ENCODE measurements at regions of chr16 and their contacts with region 1.

Region 1: GRCh38 chr16:87765776-87766484 is at the start of gene KLHDC4:
- DNase-seq: peak; percentile 93
- ATAC-seq: peak; percentile 85
- H3K4me3 ChIP-seq: peak within 1 kb of the TSS; percentile 59 to 95 (median 78)
- H3K4me3 Mint-ChIP-seq: peak within 1 kb of the TSS; percentile 100
- H3K27ac ChIP-seq: peak within 1 kb of the TSS; percentile 93
- H3K27ac Mint-ChIP-seq: peak within 1 kb of the TSS; percentile 98
- H3K4me1 ChIP-seq: peaks cover 15 to 26% of the 10 kb centered on the region in 2 donors
- H3K4me1 Mint-ChIP-seq: peaks cover 36% of the 10 kb centered on the region
- H3K27me3 ChIP-seq: no peaks in the 10 kb centered on the region
- H3K27me3 Mint-ChIP-seq: no peaks in the 10 kb centered on the region
- CTCF ChIP-seq: no peak
- total RNA-seq, gene KLHDC4: 90.8 and 115 TPM in 2 replicates

Region 2: GRCh38 chr16:87033541-87034300 is 732.2 kb before region 1 on chr16:
- CTCF ChIA-PET with region 1: no interaction called
- POLR2A ChIA-PET with region 1: no interaction called
- intact Hi-C with region 1: no loop called
- DNase-seq: no peak
- ATAC-seq: no peak
- H3K4me3 ChIP-seq: no peak overlapping the region
- H3K4me3 Mint-ChIP-seq: no peak overlapping the region
- H3K27ac ChIP-seq: no peak overlapping the region
- H3K27ac Mint-ChIP-seq: no peak overlapping the region
- H3K4me1 ChIP-seq: no peaks in the 10 kb centered on the region
- H3K4me1 Mint-ChIP-seq: no peaks in the 10 kb centered on the region
- H3K27me3 ChIP-seq: no peaks in the 10 kb centered on the region
- H3K27me3 Mint-ChIP-seq: no peaks in the 10 kb centered on the region
- CTCF ChIP-seq: no peak

Region 3: DNA sequence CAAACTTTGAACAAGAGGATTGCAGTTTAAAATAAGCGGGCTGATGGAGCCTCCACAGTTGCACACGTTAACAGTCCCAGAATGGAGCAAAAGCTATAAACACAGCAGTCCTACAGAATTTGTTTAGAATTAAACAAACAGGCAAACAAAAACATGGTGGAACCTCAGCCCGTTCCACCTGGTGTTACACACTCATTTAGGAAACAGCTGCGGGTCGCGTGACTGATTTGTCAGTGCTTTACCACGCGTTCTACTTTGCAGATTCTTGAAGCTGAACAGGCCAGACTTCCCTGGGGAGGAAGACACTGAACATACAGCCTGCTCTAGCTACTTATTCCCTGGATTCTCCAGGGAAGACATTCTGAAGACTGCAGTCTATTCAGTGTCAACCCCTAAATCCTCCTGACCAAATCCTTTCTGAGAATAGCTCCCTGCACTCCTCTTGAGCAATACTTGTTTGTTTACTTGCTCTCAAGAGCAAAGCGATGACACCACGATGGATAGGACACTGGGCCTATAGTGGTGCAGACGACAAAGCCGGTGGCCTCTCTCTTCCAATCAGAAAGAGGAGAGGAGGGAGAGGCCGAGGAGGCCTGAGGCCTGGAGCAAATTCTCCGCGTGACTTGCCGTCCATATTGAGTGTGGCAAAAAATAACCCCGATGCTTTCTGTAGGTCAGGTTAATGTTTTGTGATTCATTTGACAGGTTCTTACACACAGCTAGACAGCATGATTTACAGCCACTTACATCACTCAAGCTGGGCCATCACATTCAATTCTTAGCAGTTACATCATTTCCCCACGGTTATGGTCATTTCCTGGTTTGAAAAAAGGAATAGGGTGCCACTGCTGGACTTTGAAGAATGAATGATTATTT is 377.8 kb before region 1 on chr16:
- CTCF ChIA-PET with region 1: no interaction called
- POLR2A ChIA-PET with region 1: no interaction called
- intact Hi-C with region 1: loop called (anchors 2 kb)
- DNase-seq: peak; percentile 96
- ATAC-seq: peak; percentile 56
- H3K4me3 ChIP-seq: peak overlapping the region; percentile 19 to 39 (median 35)
- H3K4me3 Mint-ChIP-seq: peak overlapping the region; percentile 68
- H3K27ac ChIP-seq: peak overlapping the region; percentile 94 to 98
- H3K27ac Mint-ChIP-seq: peak overlapping the region; percentile 98
- H3K4me1 ChIP-seq: peaks cover 36 to 52% of the 10 kb centered on the region in 2 donors
- H3K4me1 Mint-ChIP-seq: peaks cover 50% of the 10 kb centered on the region
- H3K27me3 ChIP-seq: no peaks in the 10 kb centered on the region
- H3K27me3 Mint-ChIP-seq: no peaks in the 10 kb centered on the region
- CTCF ChIP-seq: no peak

Region 4: GRCh38 chr16:87550496-87550961 is 215.4 kb before region 1 on chr16:
- CTCF ChIA-PET with region 1: interaction called, 16 read pairs
- POLR2A ChIA-PET with region 1: no interaction called
- intact Hi-C with region 1: no loop called
- DNase-seq: peak; percentile 64
- ATAC-seq: peak; percentile 73
- H3K4me3 ChIP-seq: no peak overlapping the region
- H3K4me3 Mint-ChIP-seq: no peak overlapping the region
- H3K27ac ChIP-seq: no peak overlapping the region
- H3K27ac Mint-ChIP-seq: no peak overlapping the region
- H3K4me1 ChIP-seq: no peaks in the 10 kb centered on the region
- H3K4me1 Mint-ChIP-seq: no peaks in the 10 kb centered on the region
- H3K27me3 ChIP-seq: peaks cover 0 to 2% (median 0%) of the 10 kb centered on the region in 4 experiments
- H3K27me3 Mint-ChIP-seq: peaks cover 43% of the 10 kb centered on the region
- CTCF ChIP-seq: peak; percentile 93

Region 5: GRCh38 chr16:87587636-87588035 is 178.3 kb before region 1 on chr16:
- CTCF ChIA-PET with region 1: interaction called, 14 read pairs
- POLR2A ChIA-PET with region 1: no interaction called
- intact Hi-C with region 1: no loop called
- DNase-seq: no peak
- ATAC-seq: no peak
- H3K4me3 ChIP-seq: no peak overlapping the region
- H3K4me3 Mint-ChIP-seq: no peak overlapping the region
- H3K27ac ChIP-seq: no peak overlapping the region
- H3K27ac Mint-ChIP-seq: no peak overlapping the region
- H3K4me1 ChIP-seq: no peaks in the 10 kb centered on the region
- H3K4me1 Mint-ChIP-seq: peaks cover 2% of the 10 kb centered on the region
- H3K27me3 ChIP-seq: peaks cover 0 to 14% (median 1%) of the 10 kb centered on the region in 4 experiments
- H3K27me3 Mint-ChIP-seq: peaks cover 47% of the 10 kb centered on the region
- CTCF ChIP-seq: no peak

Region 6: GRCh38 chr16:87702325-87702811 is 63.6 kb before region 1 on chr16:
- CTCF ChIA-PET with region 1: interaction called, 6 read pairs
- POLR2A ChIA-PET with region 1: interaction called, 4 read pairs
- intact Hi-C with region 1: loop called (anchors 5 kb)
- DNase-seq: peak; percentile 74
- ATAC-seq: peak; percentile 51
- H3K4me3 ChIP-seq: peak overlapping the region in 1 of 5 experiments; percentile 38
- H3K4me3 Mint-ChIP-seq: peak overlapping the region; percentile 63
- H3K27ac ChIP-seq: peak overlapping the region; percentile 79 to 80
- H3K27ac Mint-ChIP-seq: peak overlapping the region; percentile 91
- H3K4me1 ChIP-seq: peaks cover 45 to 67% of the 10 kb centered on the region in 2 donors
- H3K4me1 Mint-ChIP-seq: peaks cover 56% of the 10 kb centered on the region
- H3K27me3 ChIP-seq: no peaks in the 10 kb centered on the region
- H3K27me3 Mint-ChIP-seq: no peaks in the 10 kb centered on the region
- CTCF ChIP-seq: peak; percentile 45

Region 7: GRCh38 chr16:87790278-87791032 is 24.5 kb after region 1 on chr16:
- CTCF ChIA-PET with region 1: no interaction called
- POLR2A ChIA-PET with region 1: no interaction called
- intact Hi-C with region 1: no loop called
- DNase-seq: no peak
- ATAC-seq: no peak
- H3K4me3 ChIP-seq: no peak overlapping the region
- H3K4me3 Mint-ChIP-seq: no peak overlapping the region
- H3K27ac ChIP-seq: no peak overlapping the region
- H3K27ac Mint-ChIP-seq: no peak overlapping the region
- H3K4me1 ChIP-seq: no peaks in the 10 kb centered on the region
- H3K4me1 Mint-ChIP-seq: no peaks in the 10 kb centered on the region
- H3K27me3 ChIP-seq: no peaks in the 10 kb centered on the region
- H3K27me3 Mint-ChIP-seq: no peaks in the 10 kb centered on the region
- CTCF ChIP-seq: no peak

Region 8: GRCh38 chr16:87877938-87878507 is 112.1 kb after region 1 on chr16:
- CTCF ChIA-PET with region 1: interaction called, 31 read pairs
- POLR2A ChIA-PET with region 1: interaction called, 5 read pairs
- intact Hi-C with region 1: no loop called
- DNase-seq: no peak
- ATAC-seq: no peak
- H3K4me3 ChIP-seq: no peak overlapping the region
- H3K4me3 Mint-ChIP-seq: no peak overlapping the region
- H3K27ac ChIP-seq: no peak overlapping the region
- H3K27ac Mint-ChIP-seq: no peak overlapping the region
- H3K4me1 ChIP-seq: no peaks in the 10 kb centered on the region
- H3K4me1 Mint-ChIP-seq: peaks cover 7% of the 10 kb centered on the region
- H3K27me3 ChIP-seq: peaks cover 0 to 7% (median 1%) of the 10 kb centered on the region in 4 experiments
- H3K27me3 Mint-ChIP-seq: peaks cover 23% of the 10 kb centered on the region
- CTCF ChIP-seq: no peak

Region 9: GRCh38 chr16:88192612-88193011 is 426.7 kb after region 1 on chr16:
- CTCF ChIA-PET with region 1: no interaction called
- POLR2A ChIA-PET with region 1: no interaction called
- intact Hi-C with region 1: no loop called
- DNase-seq: no peak
- ATAC-seq: no peak
- H3K4me3 ChIP-seq: no peak overlapping the region
- H3K4me3 Mint-ChIP-seq: no peak overlapping the region
- H3K27ac ChIP-seq: no peak overlapping the region
- H3K27ac Mint-ChIP-seq: peak overlapping the region; percentile 2
- H3K4me1 ChIP-seq: no peaks in the 10 kb centered on the region
- H3K4me1 Mint-ChIP-seq: peaks cover 2% of the 10 kb centered on the region
- H3K27me3 ChIP-seq: no peaks in the 10 kb centered on the region
- H3K27me3 Mint-ChIP-seq: peaks cover 5% of the 10 kb centered on the region
- CTCF ChIP-seq: no peak

Region 10: GRCh38 chr16:88569985-88570690 is 804.2 kb after region 1 on chr16 and contains the start of gene ZC3H18:
- CTCF ChIA-PET with region 1: interaction called, 6 read pairs
- POLR2A ChIA-PET with region 1: interaction called, 7 read pairs
- intact Hi-C with region 1: loop called (anchors 5 kb)
- DNase-seq: peak; percentile 99
- ATAC-seq: peak; percentile 93
- H3K4me3 ChIP-seq: peak within 1 kb of the TSS; percentile 55 to 76 (median 73)
- H3K4me3 Mint-ChIP-seq: peak within 1 kb of the TSS; percentile 90
- H3K27ac ChIP-seq: peak within 1 kb of the TSS; percentile 52 to 87
- H3K27ac Mint-ChIP-seq: peak within 1 kb of the TSS; percentile 91
- H3K4me1 ChIP-seq: peaks cover 17 to 18% of the 10 kb centered on the region in 2 donors
- H3K4me1 Mint-ChIP-seq: peaks cover 25% of the 10 kb centered on the region
- H3K27me3 ChIP-seq: no peaks in the 10 kb centered on the region
- H3K27me3 Mint-ChIP-seq: no peaks in the 10 kb centered on the region
- CTCF ChIP-seq: no peak
- total RNA-seq, gene ZC3H18: 74.2 and 84.1 TPM in 2 replicates